Left ventricle myocardium inferior (tissue), 1 donor: ENCODE measurements at regions of chr7 and their contacts with region 1.

Region 1: DNA sequence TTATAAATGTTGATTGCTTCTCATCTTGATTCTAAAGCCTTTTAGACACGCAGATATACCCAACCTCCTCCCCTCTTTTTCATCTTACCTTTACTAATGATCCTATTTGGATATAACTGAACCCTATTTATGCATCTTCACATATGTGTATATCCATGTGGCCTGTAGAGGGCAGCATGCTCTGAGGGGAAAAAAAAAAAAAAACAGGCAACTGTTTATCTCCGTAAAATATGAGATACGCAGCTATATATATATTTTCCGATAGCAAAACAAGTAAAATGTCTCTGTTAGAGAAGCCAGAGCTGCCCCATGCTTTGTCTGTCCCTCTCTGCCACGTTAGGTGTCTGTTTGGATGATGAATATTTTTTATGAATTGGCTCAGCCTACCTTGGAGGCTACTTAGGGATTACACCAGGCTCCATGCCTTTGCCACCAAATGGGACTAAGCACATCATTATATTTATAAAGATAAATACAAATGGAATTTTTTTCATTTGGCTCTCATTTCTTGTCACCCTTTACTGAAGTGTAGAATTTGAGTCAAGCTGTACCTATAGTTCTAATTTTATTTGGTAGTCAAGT is 174.8 kb upstream of the FZD1 start:
- DNase-seq: no peak
- H3K4me3 ChIP-seq: peak overlapping the region; percentile 48
- H3K27ac ChIP-seq: peak overlapping the region; percentile 16
- H3K4me1 ChIP-seq: peaks cover 16% of the 10 kb centered on the region
- H3K27me3 ChIP-seq: no peaks in the 10 kb centered on the region
- CTCF ChIP-seq: peak; percentile 84

Region 2: DNA sequence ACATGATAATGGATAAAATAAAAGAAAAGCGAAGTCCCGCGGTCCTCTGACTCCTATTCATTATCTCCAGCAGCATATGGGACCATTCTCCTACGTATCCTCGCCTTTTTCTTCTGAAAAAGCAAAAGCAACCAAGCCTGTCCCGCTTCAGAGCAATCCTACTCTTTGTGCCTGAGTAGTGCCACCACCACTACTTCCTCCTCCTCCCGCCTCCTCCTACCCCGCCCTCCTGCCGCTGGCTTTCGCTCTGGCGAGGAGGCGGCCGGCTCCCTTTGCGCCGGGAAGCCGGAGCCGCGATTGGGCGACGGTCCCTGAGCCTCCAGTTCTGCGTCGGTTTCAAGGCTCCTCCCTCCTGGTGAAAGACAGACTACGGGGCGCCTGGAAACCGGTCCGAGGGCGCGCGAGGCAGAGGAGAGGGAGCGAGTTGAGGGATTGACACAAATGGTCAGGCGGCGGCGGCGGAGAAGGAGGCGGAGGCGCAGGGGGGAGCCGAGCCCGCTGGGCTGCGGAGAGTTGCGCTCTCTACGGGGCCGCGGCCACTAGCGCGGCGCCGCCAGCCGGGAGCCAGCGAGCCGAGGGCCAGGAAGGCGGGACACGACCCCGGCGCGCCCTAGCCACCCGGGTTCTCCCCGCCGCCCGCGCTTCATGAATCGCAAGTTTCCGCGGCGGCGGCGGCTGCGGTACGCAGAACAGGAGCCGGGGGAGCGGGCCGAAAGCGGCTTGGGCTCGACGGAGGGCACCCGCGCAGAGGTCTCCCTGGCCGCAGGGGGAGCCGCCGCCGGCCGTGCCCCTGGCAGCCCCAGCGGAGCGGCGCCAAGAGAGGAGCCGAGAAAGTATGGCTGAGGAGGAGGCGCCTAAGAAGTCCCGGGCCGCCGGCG is 174.8 kb after region 1 on chr7 and contains the start of gene FZD1:
- intact Hi-C with region 1: loop called (anchors 10 kb)
- DNase-seq: peak; percentile 96
- H3K4me3 ChIP-seq: peak within 1 kb of the TSS; percentile 77
- H3K27ac ChIP-seq: peak within 1 kb of the TSS; percentile 98
- H3K4me1 ChIP-seq: peaks cover 54% of the 10 kb centered on the region
- H3K27me3 ChIP-seq: no peaks in the 10 kb centered on the region
- CTCF ChIP-seq: no peak
- total RNA-seq, gene FZD1: 14.1 TPM

Region 3: DNA sequence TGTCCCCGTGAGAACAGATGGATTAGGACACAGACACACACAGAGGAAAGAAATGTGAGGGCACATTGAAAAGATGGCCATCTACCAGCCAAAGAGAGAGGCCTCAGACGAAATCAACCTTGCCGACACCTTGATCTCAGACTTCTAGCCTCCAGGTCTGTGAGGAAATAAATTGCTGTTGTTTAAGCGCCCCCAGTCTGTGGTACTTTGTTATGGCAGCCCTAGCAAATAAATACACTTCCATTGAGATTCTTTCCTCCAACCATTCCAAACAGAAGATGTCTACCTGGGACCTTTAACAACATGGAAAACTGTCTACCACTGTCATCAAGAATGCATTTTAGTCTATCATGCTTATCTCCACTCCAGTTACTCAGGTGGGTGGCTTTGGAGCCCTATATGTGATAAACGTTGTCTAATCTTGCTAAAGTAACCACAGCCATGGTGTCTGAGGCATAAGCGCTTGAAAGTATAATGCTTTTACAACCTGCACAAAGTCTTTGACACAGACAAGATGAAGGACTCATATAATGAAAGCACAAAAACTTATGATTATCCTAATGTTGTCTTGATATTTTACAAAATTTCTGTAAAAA is 546.8 kb after region 1 on chr7:
- intact Hi-C with region 1: loop called (anchors 10 kb)
- DNase-seq: no peak
- H3K4me3 ChIP-seq: no peak overlapping the region
- H3K27ac ChIP-seq: no peak overlapping the region
- H3K4me1 ChIP-seq: peaks cover 18% of the 10 kb centered on the region
- H3K27me3 ChIP-seq: no peaks in the 10 kb centered on the region
- CTCF ChIP-seq: peak; percentile 70

Region 4: DNA sequence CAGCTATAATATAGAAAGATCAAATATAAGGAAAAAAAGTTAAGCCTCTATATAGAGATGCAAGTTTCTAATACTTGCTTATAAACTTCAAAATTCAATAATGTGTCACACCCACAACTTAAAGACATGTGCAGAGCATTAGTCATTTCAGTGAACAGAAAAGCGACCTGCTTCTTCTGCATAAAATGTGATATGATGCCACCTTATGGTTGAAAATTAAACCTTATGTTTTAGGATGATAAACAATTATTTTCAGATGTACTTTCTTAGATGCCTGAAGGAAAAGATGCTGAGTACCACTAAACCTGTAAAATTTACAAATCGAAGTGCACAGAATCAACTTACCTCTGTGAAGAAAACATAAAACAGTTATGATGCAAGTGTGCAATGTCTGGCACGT is 695.0 kb after region 1 on chr7:
- intact Hi-C with region 1: loop called (anchors 10 kb)
- DNase-seq: no peak
- H3K4me3 ChIP-seq: no peak overlapping the region
- H3K27ac ChIP-seq: no peak overlapping the region
- H3K4me1 ChIP-seq: no peaks in the 10 kb centered on the region
- H3K27me3 ChIP-seq: no peaks in the 10 kb centered on the region
- CTCF ChIP-seq: peak; percentile 53